ENCODE measurements at regions of chr20 and their contacts with region 1.

Region 1: DNA sequence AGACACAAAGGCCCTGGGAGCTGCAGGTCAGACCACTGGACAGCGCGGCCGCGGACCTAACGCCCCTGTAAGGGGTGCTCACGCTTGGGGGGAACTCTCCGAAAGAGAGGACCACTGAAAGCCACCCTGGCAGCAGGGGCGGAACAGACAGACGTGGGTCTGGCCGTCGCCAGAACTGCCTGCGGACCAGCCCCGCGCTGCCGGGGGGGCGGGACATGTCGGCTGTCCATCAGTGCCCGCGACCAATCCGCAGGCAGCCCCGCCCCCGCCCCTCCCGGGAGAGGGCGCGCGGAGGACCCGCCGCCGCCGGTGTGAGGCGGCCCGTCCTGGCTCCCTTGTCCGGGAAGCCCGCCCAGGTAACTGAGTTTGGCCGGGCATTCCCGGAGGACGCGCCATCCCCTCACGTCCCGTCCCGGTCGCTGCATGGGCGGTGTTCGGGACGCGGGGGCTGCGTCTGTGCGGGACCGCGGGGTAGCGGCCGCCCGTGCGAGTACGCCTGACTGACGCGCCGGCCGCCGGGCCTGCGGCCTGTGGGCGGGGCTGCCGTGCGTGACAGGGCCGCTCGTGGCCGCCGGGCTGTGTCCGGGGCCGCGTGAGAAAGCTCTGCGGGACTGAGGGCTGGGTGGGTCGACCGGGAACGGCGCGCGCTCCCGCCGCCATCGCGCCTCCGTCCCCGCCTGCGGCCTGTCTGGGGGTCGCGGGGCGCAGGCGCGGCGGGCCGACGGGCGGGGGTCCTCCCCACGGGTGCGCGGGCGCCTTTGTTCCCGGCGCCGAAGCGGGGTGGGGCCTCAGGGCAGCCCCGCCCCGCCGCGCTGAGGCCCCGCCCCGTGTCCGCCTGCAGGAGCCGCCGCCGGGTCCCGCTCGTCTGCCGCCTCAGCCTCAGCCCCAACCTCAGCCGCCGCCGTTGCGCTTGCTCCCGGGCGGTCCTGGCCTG is at the start of gene PLCG1:
- DNase-seq: peak; percentile 92
- H3K4me3 ChIP-seq: peak within 1 kb of the TSS; percentile 93
- H3K27ac ChIP-seq: peak within 1 kb of the TSS; percentile 92
- H3K4me1 ChIP-seq: peaks cover 26% of the 10 kb centered on the region
- H3K27me3 ChIP-seq: no peaks in the 10 kb centered on the region
- CTCF ChIP-seq: no peak
- total RNA-seq, gene PLCG1: 146 and 174 TPM in 2 replicates

Region 2: GRCh38 chr20:41028348-41029148 is 108.4 kb before region 1 on chr20 and contains the start of gene TOP1:
- CTCF ChIA-PET with region 1: no interaction called
- POLR2A ChIA-PET with region 1: no interaction called
- intact Hi-C with region 1: no loop called
- DNase-seq: peak; percentile 100
- H3K4me3 ChIP-seq: peak within 1 kb of the TSS; percentile 96
- H3K27ac ChIP-seq: peak within 1 kb of the TSS; percentile 98
- H3K4me1 ChIP-seq: peaks cover 35% of the 10 kb centered on the region
- H3K27me3 ChIP-seq: no peaks in the 10 kb centered on the region
- CTCF ChIP-seq: no peak
- total RNA-seq, gene TOP1: 108 and 125 TPM in 2 replicates

Region 3: DNA sequence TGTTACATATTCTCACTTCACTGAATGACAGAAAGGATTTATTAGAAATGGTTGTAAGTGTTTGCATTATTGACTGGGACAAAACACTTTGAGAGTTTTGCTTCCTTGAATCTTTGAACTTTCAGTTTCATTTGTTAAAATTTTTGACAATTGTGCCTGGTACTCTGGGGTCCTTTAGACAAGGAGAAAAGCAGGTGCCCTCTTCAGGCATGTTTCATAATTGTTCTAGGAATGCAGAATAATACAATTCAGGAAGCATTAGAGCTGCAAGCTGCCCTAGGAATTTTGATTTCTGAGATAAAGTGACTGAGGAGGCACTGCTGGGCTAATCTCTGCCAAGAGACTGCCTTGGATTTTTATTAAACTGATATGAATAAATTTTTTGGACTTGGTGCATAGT is 58.6 kb before region 1 on chr20:
- CTCF ChIA-PET with region 1: no interaction called
- POLR2A ChIA-PET with region 1: no interaction called
- intact Hi-C with region 1: loop called (anchors 10 kb)
- DNase-seq: peak; percentile 83
- H3K4me3 ChIP-seq: no peak overlapping the region
- H3K27ac ChIP-seq: peak overlapping the region; percentile 57
- H3K4me1 ChIP-seq: peaks cover 26% of the 10 kb centered on the region
- H3K27me3 ChIP-seq: no peaks in the 10 kb centered on the region
- CTCF ChIP-seq: peak; percentile 70

Region 4: DNA sequence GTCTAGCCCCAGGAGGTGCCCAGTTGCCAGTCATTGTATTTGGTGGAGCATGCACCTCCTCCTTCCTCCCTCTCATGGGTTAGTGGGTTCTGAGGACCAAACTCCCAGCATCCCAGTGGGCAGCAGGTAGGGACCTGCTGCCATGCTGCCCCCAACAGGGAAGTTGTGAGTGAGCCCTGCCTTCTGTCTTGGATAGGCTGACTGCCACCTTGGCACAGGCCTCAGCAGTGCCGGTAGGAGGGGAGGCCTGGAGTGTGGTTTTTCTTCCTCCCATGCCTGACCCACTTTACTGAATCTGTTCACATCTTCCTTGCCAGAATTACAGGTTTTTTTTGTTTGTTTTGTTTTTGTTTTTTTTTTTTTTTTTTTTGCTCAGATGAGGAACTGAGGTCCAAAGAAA is 24.9 kb after region 1 on chr20:
- CTCF ChIA-PET with region 1: no interaction called
- POLR2A ChIA-PET with region 1: no interaction called
- intact Hi-C with region 1: no loop called
- DNase-seq: no peak
- H3K4me3 ChIP-seq: no peak overlapping the region
- H3K27ac ChIP-seq: no peak overlapping the region
- H3K4me1 ChIP-seq: no peaks in the 10 kb centered on the region
- H3K27me3 ChIP-seq: no peaks in the 10 kb centered on the region
- CTCF ChIP-seq: no peak

Region 5: GRCh38 chr20:41173161-41173721 is 36.3 kb after region 1 on chr20:
- CTCF ChIA-PET with region 1: no interaction called
- POLR2A ChIA-PET with region 1: no interaction called
- intact Hi-C with region 1: no loop called
- DNase-seq: peak; percentile 78
- H3K4me3 ChIP-seq: no peak overlapping the region
- H3K27ac ChIP-seq: no peak overlapping the region
- H3K4me1 ChIP-seq: peaks cover 5% of the 10 kb centered on the region
- H3K27me3 ChIP-seq: no peaks in the 10 kb centered on the region
- CTCF ChIP-seq: peak; percentile 94

Region 6: GRCh38 chr20:41232973-41233926 is 96.3 kb after region 1 on chr20:
- CTCF ChIA-PET with region 1: no interaction called
- POLR2A ChIA-PET with region 1: no interaction called
- intact Hi-C with region 1: loop called (anchors 5 kb)
- DNase-seq: no peak
- H3K4me3 ChIP-seq: peak overlapping the region; percentile 31
- H3K27ac ChIP-seq: no peak overlapping the region
- H3K4me1 ChIP-seq: peaks cover 24% of the 10 kb centered on the region
- H3K27me3 ChIP-seq: no peaks in the 10 kb centered on the region
- CTCF ChIP-seq: no peak

Region 7: DNA sequence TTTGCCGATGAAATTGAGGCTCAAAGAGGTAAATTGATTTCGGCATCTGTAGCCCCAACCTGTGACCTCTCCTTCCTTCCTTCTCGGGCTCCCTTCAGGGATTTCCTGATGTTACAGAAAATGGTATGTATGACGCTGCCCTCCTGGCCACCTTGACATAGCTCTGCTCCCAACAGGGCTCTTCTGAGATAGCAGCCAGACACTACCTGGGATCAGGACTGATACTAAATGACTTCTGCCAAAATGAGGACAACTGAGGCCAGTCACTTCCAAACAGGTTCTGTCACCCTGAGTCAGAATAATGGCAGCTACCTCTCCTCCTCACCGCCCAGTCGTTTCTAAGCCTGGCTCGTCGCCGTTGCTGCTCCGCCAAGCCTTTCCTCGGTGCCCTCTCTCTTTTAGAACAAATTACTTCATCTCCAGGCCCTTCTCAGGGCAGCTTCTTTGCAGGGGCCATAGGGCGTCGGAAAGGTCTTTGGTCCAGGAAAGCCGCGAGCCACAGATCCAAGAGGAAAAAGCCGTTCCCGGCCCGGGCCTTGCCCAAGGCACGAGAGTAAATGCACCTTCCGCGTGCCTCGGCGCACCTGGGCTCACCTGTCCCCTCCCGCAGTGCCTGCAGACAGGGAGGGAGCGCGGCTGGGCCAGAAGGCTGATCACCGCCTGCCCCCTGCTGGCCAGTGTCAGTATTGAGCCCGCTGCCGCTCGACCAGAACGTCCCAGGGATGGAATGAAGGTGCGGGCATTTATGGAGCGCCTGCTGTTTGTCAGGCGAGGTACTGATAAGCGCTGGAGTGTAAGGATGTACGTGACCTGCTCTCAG is 202.8 kb after region 1 on chr20:
- CTCF ChIA-PET with region 1: interaction called, 19 read pairs
- POLR2A ChIA-PET with region 1: no interaction called
- intact Hi-C with region 1: loop called (anchors 1 kb)
- DNase-seq: peak; percentile 70
- H3K4me3 ChIP-seq: peak overlapping the region; percentile 41
- H3K27ac ChIP-seq: no peak overlapping the region
- H3K4me1 ChIP-seq: peaks cover 5% of the 10 kb centered on the region
- H3K27me3 ChIP-seq: no peaks in the 10 kb centered on the region
- CTCF ChIP-seq: peak; percentile 98

Region 8: GRCh38 chr20:41357424-41358163 is 220.6 kb after region 1 on chr20:
- CTCF ChIA-PET with region 1: no interaction called
- POLR2A ChIA-PET with region 1: no interaction called
- intact Hi-C with region 1: no loop called
- DNase-seq: no peak
- H3K4me3 ChIP-seq: no peak overlapping the region
- H3K27ac ChIP-seq: no peak overlapping the region
- H3K4me1 ChIP-seq: no peaks in the 10 kb centered on the region
- H3K27me3 ChIP-seq: no peaks in the 10 kb centered on the region
- CTCF ChIP-seq: no peak

Measured in A673 (cell line).